ENCODE measurements at regions of chr10 and their contacts with region 1.

Region 1: DNA sequence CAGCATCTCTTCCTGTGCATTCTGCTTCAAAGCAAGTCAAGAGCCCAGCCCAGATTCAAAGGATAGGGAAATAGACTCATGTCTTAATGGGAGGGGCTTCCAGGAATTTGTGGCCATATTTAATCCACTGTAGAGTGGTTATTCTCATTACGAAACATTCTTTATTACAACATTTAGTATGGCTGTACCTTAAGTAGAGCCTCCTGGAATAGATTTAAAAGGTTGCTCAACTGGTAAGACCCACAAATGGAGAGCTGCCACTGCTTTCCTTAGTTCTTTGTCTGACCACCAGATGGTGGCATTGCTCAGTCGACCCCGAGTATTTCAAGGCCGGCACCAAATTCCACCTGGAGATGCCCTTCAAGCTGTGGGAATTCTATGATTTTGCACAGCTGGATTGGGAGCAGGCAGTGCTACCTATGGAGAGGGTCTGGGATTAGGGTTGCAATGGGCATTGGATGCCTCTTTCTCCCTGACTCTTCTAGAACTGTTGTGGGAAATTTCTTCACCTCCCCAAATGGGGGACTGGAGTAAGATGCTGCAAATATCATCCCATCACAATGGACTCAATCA is 102.2 kb downstream of the RBM20 start:
- DNase-seq: peak; percentile 38 to 61 (median 52)
- H3K4me3 ChIP-seq: no peak overlapping the region
- H3K27ac ChIP-seq: no peak overlapping the region
- H3K4me1 ChIP-seq: no peaks in the 10 kb centered on the region
- H3K27me3 ChIP-seq: no peaks in the 10 kb centered on the region
- CTCF ChIP-seq: peak; percentile 27 to 60 (median 50)
- EP300 ChIP-seq: no peak
- POLR2A ChIP-seq: no peak

Region 2: GRCh38 chr10:110803830-110804338 is 57.5 kb after region 1 on chr10:
- intact Hi-C with region 1: loop called in 1 of 4 experiments (anchors 5 kb)
- DNase-seq: peak; percentile 64 to 79 (median 72)
- H3K4me3 ChIP-seq: no peak overlapping the region
- H3K27ac ChIP-seq: peak overlapping the region in 1 of 2 donors; percentile 5
- H3K4me1 ChIP-seq: peaks cover 5% of the 10 kb centered on the region
- H3K27me3 ChIP-seq: no peaks in the 10 kb centered on the region
- CTCF ChIP-seq: peak; percentile 62 to 81 (median 70)
- EP300 ChIP-seq: no peak
- POLR2A ChIP-seq: no peak

Region 3: DNA sequence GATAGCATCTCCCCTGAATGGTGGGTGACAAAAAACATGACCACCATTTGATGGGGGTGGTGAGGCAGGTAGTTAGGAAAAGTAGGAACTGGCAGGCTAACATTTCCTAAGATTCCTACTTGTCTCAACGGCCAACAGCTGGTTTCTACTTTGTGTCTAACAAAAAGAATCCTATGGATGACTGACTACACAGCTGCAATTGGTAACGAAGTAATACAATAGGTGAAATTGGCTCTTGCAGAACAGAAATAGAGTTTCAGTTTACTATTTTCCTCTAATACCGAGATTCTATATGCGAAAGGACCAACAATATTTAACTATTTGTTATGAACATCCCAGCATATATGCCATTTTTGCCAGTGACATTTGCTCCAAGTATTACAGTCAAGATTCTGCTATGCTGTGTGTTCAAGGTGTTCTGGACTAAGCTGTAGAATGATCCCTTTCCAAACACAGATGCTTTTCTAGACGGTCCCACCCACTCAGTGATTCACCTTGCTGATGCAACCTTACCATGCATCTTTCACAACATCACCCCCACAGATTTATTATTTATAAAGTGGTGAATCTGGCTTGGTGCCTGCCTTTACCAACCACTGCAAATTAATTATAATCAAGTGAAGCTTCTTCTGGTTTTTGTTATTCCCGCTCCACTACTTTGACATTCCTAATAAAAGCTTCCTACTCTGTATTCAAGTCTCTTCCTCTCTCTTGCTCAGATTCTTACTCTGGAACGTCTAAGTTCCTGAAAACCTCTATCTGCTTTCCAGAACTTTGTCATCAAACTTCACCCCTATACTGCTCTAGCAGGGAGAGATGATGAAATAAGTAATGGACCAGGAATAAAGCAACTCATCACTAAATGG is 155.8 kb after region 1 on chr10:
- intact Hi-C with region 1: loop called in 1 of 4 experiments (anchors 5 kb)
- DNase-seq: no peak
- H3K4me3 ChIP-seq: no peak overlapping the region
- H3K27ac ChIP-seq: no peak overlapping the region
- H3K4me1 ChIP-seq: no peaks in the 10 kb centered on the region
- H3K27me3 ChIP-seq: no peaks in the 10 kb centered on the region
- CTCF ChIP-seq: no peak
- EP300 ChIP-seq: no peak
- POLR2A ChIP-seq: no peak

Measured in ovary (tissue), 10 donors.